ENCODE measurements at regions of chr2 and their contacts with region 1.

Region 1: GRCh38 chr2:220335591-220335915 is 708.1 kb downstream of the SLC4A3 start:
- DNase-seq: peak; percentile 54
- H3K4me3 ChIP-seq: no peak overlapping the region
- H3K27ac ChIP-seq: peak overlapping the region; percentile 96
- H3K4me1 ChIP-seq: peaks cover 47% of the 10 kb centered on the region
- H3K27me3 ChIP-seq: no peaks in the 10 kb centered on the region
- CTCF ChIP-seq: no peak

Region 2: DNA sequence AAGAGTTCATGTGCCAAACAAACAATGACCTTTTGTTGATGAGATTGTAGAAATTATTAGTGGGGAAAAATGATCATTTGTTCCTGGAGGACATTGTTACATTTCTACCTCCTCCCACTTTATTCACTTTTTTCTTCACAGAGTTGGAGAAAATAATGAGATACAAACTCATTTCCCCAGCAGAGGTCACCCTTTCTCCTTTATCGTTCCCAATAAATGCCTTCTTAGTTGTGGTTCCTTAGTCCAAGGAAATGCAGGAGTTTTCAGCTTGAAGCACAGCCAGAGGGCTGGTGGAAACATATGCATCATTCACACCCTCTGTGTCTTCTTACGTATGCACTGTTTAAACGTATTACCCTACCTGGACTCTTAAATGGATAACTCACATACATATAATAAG is 599.3 kb before region 1 on chr2:
- CTCF ChIA-PET with region 1: interaction called, 6 read pairs
- POLR2A ChIA-PET with region 1: no interaction called
- intact Hi-C with region 1: loop called (anchors 2 kb)
- DNase-seq: peak; percentile 91
- H3K4me3 ChIP-seq: no peak overlapping the region
- H3K27ac ChIP-seq: no peak overlapping the region
- H3K4me1 ChIP-seq: peaks cover 19% of the 10 kb centered on the region
- H3K27me3 ChIP-seq: no peaks in the 10 kb centered on the region
- CTCF ChIP-seq: peak; percentile 64

Region 3: DNA sequence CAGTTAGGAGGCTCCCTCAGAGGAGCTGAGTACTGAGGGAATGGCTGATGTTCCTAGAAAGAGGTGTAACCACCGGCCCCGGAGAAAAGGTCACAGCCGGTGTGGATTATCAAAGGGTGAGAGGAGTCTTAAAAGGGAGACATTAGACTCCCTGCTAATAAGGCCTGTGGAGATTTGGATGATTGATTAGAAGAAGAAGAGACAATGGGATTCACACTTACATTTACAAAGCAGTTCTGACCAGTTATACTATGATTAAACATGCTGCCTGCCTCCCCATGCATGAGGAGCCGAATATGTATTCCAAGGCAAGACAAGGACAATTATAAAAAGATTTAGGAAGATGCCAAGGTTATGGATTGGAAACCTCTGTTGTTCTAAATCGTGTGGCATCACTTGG is 405.7 kb before region 1 on chr2:
- CTCF ChIA-PET with region 1: no interaction called
- POLR2A ChIA-PET with region 1: no interaction called
- intact Hi-C with region 1: no loop called
- DNase-seq: no peak
- H3K4me3 ChIP-seq: no peak overlapping the region
- H3K27ac ChIP-seq: no peak overlapping the region
- H3K4me1 ChIP-seq: no peaks in the 10 kb centered on the region
- H3K27me3 ChIP-seq: no peaks in the 10 kb centered on the region
- CTCF ChIP-seq: no peak

Region 4: GRCh38 chr2:219997341-219997851 is 338.2 kb before region 1 on chr2:
- CTCF ChIA-PET with region 1: interaction called, 3 read pairs
- POLR2A ChIA-PET with region 1: no interaction called
- intact Hi-C with region 1: loop called (anchors 2 kb)
- DNase-seq: peak; percentile 89
- H3K4me3 ChIP-seq: no peak overlapping the region
- H3K27ac ChIP-seq: peak overlapping the region; percentile 22
- H3K4me1 ChIP-seq: peaks cover 31% of the 10 kb centered on the region
- H3K27me3 ChIP-seq: no peaks in the 10 kb centered on the region
- CTCF ChIP-seq: peak; percentile 88

Region 5: DNA sequence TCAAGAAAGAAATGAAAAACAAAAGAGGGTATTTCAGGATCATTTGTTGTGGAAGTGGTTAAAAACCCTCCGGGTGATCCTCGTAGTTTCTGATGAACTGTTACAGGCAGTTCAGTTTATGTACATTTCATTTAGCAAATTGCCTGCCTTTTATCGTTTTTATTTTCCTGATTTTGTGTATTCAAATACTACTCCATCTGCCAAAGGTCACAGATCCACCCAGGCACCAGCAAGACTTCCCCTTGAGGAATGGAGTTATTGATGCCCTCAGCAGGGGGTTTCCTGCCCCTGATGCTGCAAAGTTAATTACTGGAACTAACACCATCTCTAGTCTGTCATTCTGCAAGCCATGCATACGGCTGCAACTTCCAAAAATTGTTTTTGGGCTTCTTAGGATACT is 66.2 kb before region 1 on chr2:
- CTCF ChIA-PET with region 1: interaction called, 3 read pairs
- POLR2A ChIA-PET with region 1: no interaction called
- intact Hi-C with region 1: loop called (anchors 1 kb)
- DNase-seq: peak; percentile 99
- H3K4me3 ChIP-seq: no peak overlapping the region
- H3K27ac ChIP-seq: peak overlapping the region; percentile 75
- H3K4me1 ChIP-seq: peaks cover 51% of the 10 kb centered on the region
- H3K27me3 ChIP-seq: no peaks in the 10 kb centered on the region
- CTCF ChIP-seq: no peak

Region 6: DNA sequence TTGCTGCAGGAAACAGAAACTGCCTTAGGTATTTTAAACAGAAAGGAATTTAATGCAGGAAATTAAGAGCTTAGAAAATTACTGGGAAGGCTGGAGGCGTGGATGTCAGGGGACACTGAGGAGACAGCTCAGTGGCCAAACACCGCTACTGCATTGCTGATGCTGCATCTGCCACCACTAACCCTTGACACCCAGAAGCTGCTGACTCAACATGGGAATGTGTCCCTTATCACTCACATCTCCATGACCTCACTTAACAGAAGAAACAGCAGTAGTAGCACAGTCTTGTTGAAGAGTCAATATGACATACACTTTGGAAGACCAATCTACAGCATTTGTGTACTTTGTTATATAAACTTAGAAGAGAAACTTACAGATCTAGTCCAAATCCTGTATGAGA is 197.9 kb after region 1 on chr2:
- CTCF ChIA-PET with region 1: no interaction called
- POLR2A ChIA-PET with region 1: no interaction called
- intact Hi-C with region 1: no loop called
- DNase-seq: peak; percentile 69
- H3K4me3 ChIP-seq: no peak overlapping the region
- H3K27ac ChIP-seq: no peak overlapping the region
- H3K4me1 ChIP-seq: no peaks in the 10 kb centered on the region
- H3K27me3 ChIP-seq: no peaks in the 10 kb centered on the region
- CTCF ChIP-seq: peak; percentile 45; the same call in 1 of the 2 replicates

Region 7: GRCh38 chr2:220664272-220665107 is 328.9 kb after region 1 on chr2:
- CTCF ChIA-PET with region 1: no interaction called
- POLR2A ChIA-PET with region 1: no interaction called
- intact Hi-C with region 1: loop called (anchors 5 kb)
- DNase-seq: peak; percentile 56
- H3K4me3 ChIP-seq: no peak overlapping the region
- H3K27ac ChIP-seq: no peak overlapping the region
- H3K4me1 ChIP-seq: peaks cover 10% of the 10 kb centered on the region
- H3K27me3 ChIP-seq: no peaks in the 10 kb centered on the region
- CTCF ChIP-seq: no peak

Measured in A673 (cell line).